ENCODE measurements at regions of chr2 and their contacts with region 1.

Region 1: DNA sequence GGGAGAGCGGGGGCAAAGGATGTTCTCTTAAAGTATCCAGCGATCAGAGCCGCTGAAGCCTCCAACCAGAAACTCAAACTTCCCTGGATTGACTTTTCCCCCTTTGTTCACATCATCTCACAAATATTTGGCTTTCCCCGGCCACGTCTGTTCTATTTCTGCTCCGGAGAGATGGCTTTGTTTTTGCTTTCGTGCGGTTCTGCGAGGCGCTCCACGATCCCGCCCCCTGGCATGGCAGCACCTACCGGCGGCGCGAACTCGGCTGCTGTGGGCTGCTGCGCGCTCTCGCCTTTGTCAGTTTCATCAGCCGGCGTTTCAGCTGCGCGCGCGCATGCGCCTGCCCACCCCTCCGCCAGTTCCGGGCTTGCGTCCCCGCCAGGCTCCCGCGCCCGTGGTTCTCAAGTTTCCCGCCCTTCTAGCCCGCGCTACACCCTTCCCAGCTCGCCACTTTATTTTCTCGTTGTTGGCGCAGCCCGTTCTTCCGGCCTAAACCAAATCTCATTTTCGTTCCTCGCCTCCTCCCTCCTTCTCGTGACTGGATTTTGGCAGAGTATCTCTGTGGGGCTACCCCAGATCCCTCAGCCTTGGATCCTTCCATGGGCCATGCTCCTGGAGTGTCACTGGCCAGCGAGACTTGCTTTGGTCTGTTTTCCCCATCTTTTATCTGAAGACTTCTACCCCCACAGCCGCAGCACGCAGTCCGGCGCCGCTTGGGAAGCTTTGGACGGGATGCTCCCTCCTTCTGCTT is 98.0 kb downstream of the INSIG2 start:
- DNase-seq: peak; percentile 83
- H3K4me3 Mint-ChIP-seq: peak overlapping the region; percentile 90
- H3K27ac Mint-ChIP-seq: peak overlapping the region; percentile 98
- H3K4me1 Mint-ChIP-seq: peaks cover 53% of the 10 kb centered on the region
- H3K27me3 Mint-ChIP-seq: no peaks in the 10 kb centered on the region

Region 2: DNA sequence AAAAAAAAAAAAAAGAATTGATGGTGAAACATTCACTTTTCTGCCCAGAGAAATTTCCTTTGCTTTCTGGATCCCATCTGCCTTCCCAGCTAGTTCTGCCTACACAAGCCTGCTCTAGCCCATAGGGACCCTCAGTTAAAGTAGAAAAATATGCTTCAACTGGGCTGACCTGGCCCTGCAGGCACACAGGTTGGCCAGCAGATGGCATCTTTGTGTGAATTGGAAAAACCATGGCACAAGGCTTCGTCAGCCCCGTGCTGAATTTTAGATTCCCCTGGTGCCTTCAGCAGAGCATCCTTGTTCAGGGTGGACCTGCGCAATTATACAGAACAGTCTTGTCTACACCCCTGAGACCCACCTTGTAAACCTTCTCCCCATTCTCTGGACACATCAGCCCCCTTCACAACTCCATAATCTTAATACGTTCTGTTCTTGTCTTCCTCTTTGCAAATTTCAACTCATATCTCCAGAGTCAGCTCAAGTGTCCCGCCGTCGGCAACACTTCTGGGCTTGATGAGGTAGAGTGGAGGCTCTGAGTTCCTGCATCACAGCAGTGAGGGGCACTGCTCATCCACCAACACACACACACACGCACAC is 16.5 kb after region 1 on chr2:
- intact Hi-C with region 1: loop called (anchors 1 kb)
- DNase-seq: peak; percentile 38
- H3K4me3 Mint-ChIP-seq: no peak overlapping the region
- H3K27ac Mint-ChIP-seq: no peak overlapping the region
- H3K4me1 Mint-ChIP-seq: peaks cover 7% of the 10 kb centered on the region
- H3K27me3 Mint-ChIP-seq: peaks cover 2% of the 10 kb centered on the region